Tibial artery (tissue), 4 donors: ENCODE measurements at regions of chr15 and their contacts with region 1.

Region 1: GRCh38 chr15:81265944-81266775 is 57.8 kb downstream of the STARD5 start:
- DNase-seq: peak; percentile 85 to 87
- H3K4me3 ChIP-seq: no peak overlapping the region
- H3K27ac ChIP-seq: no peak overlapping the region
- H3K4me1 ChIP-seq: peaks cover 0 to 11% (median 9%) of the 10 kb centered on the region in 4 donors
- H3K27me3 ChIP-seq: no peaks in the 10 kb centered on the region
- CTCF ChIP-seq: peak; percentile 84 to 85

Region 2: GRCh38 chr15:81023483-81024264 is 242.5 kb before region 1 on chr15:
- intact Hi-C with region 1: no loop called
- DNase-seq: peak; percentile 89
- H3K4me3 ChIP-seq: no peak overlapping the region
- H3K27ac ChIP-seq: peak overlapping the region in 1 of 2 donors; percentile 34
- H3K4me1 ChIP-seq: peaks cover 0 to 4% (median 0%) of the 10 kb centered on the region in 4 donors
- H3K27me3 ChIP-seq: no peaks in the 10 kb centered on the region
- CTCF ChIP-seq: no peak

Region 3: GRCh38 chr15:81106560-81106959 is 159.6 kb before region 1 on chr15:
- intact Hi-C with region 1: loop called (anchors 5 kb)
- DNase-seq: peak in 1 of 2 donors; percentile 53
- H3K4me3 ChIP-seq: no peak overlapping the region
- H3K27ac ChIP-seq: no peak overlapping the region
- H3K4me1 ChIP-seq: peaks cover 0 to 3% (median 0%) of the 10 kb centered on the region in 4 donors
- H3K27me3 ChIP-seq: peaks cover 0 to 6% of the 10 kb centered on the region in 2 donors
- CTCF ChIP-seq: peak; percentile 59 to 68

Region 4: GRCh38 chr15:81152339-81152738 is 113.8 kb before region 1 on chr15:
- intact Hi-C with region 1: loop called (anchors 5 kb)
- DNase-seq: no peak
- H3K4me3 ChIP-seq: no peak overlapping the region
- H3K27ac ChIP-seq: no peak overlapping the region
- H3K4me1 ChIP-seq: peaks cover 0 to 8% (median 0%) of the 10 kb centered on the region in 4 donors
- H3K27me3 ChIP-seq: peaks cover 0 to 2% of the 10 kb centered on the region in 2 donors
- CTCF ChIP-seq: no peak

Region 5: GRCh38 chr15:81573098-81573746 is 307.1 kb after region 1 on chr15:
- intact Hi-C with region 1: no loop called
- DNase-seq: no peak
- H3K4me3 ChIP-seq: no peak overlapping the region
- H3K27ac ChIP-seq: no peak overlapping the region
- H3K4me1 ChIP-seq: no peaks in the 10 kb centered on the region
- H3K27me3 ChIP-seq: peaks cover 0 to 3% of the 10 kb centered on the region in 2 donors
- CTCF ChIP-seq: no peak